WTC11 (cell line): ENCODE measurements at regions of chr16 and their contacts with region 1.

Region 1: DNA sequence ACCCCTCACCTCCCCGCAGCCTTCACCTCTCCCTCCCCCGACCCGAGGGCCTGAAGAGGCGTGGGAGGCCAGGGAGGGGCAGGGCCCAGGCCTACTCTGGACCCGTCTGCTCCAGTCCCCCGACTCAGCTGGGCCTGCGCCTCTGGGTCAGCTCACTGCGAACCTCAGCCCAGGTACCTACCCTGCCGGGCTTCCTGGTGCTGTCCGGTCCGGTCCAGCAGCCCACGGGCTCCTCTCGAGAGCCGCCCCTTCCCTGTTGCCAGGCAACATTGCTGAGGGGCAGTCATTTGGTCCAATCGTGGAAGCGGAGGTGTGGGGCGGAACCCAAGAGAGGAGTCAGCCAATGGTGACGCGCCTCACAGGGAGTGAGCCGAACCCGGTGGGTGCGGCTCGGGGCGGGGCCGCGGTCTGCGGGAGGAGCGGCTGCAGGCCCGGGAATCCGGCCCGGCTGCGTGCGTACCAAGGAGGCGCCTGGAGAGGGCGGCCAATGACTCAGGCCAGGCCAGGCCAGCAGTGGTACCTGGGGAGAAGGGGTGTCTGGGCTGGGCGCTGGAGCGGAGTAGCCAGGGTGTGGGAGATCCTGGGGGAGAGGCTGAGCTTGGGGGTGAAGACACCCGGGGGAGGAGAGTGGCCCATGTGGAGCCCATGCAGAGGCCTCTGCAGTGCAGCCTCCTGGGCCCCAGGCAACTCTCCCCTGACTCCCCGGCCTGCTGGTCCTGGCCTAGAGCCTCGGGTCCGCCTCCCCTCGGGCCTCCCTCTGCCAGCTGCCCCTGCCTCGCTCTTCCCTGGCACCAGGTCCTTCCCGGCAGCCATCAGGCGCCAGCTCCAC is at the start of gene MEAK7:
- DNase-seq: peak; percentile 99
- ATAC-seq: peak; percentile 96
- H3K4me3 Mint-ChIP-seq: peak within 1 kb of the TSS; percentile 79
- H3K27ac Mint-ChIP-seq: peak within 1 kb of the TSS; percentile 82
- H3K4me1 Mint-ChIP-seq: peaks cover 23% of the 10 kb centered on the region
- H3K27me3 Mint-ChIP-seq: no peaks in the 10 kb centered on the region
- CTCF ChIP-seq: no peak
- total RNA-seq, gene MEAK7: 14.4 to 16.7 TPM (median 15.3 TPM) in 3 replicates

Region 2: DNA sequence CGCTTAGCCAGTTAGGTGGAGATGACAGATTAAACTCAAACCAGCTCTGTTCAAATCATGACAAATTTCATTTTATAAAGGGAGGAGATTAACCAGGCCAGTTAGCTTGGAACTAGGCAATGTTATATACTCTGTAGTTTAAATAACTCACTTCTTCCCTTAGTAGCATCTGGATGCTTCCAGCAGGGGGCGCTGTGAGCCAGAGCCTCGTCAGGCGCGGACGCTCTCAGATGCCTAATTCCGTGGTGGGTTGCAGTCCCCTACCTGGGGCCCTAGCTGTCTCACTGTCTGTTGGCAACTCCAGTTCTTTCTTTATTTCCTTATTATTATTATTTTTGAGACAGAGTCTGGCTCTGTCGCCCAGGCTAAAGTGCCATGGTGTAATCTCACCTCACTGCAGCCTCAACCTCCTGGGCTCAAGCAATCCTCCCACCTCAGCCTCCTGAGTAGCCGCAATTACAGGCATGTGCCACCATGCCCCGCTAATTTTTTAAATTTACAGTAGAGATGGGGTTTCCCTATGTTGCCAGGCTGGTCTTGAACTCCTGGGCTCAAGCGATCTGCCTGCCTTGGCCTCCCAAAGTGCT is 227.3 kb before region 1 on chr16:
- CTCF ChIA-PET with region 1: interaction called, 12 read pairs
- POLR2A ChIA-PET with region 1: no interaction called
- DNase-seq: peak; percentile 83
- ATAC-seq: peak; percentile 79
- H3K4me3 Mint-ChIP-seq: no peak overlapping the region
- H3K27ac Mint-ChIP-seq: no peak overlapping the region
- H3K4me1 Mint-ChIP-seq: peaks cover 10% of the 10 kb centered on the region
- H3K27me3 Mint-ChIP-seq: no peaks in the 10 kb centered on the region; the same call in 1 of the 2 replicates
- CTCF ChIP-seq: peak; percentile 93

Region 3: DNA sequence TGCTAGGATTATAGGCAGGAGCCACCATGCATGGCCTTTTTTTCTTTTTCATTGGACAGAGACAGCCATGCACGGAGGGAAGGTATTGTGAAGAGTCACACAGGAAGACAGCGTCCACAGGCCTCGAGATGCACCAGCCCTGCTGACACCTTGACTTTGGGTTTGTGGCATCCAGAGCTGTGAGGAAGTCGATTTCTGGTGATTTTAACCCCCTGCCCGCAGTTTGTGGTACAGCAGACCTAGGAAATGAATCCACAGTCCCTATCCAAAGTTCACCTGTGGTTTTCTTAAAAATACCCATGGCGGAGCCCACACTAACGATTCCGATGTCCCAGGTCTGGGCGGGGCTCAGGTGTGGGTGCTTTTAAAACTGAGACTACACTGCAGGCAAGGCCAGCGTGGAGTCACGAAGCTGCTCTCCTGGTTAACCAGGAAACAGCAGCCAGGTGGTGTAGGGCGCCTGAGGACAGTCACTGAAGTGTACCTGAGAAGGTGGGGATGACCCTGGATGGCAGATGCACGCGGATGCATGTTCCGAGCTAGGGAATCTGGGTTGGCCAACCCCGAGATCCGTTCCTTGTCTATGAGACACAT is 14.2 kb after region 1 on chr16:
- CTCF ChIA-PET with region 1: interaction called, 18 read pairs
- POLR2A ChIA-PET with region 1: no interaction called
- DNase-seq: no peak
- ATAC-seq: peak; percentile 45
- H3K4me3 Mint-ChIP-seq: no peak overlapping the region
- H3K27ac Mint-ChIP-seq: no peak overlapping the region
- H3K4me1 Mint-ChIP-seq: peaks cover 19% of the 10 kb centered on the region
- H3K27me3 Mint-ChIP-seq: no peaks in the 10 kb centered on the region; the same call in 1 of the 2 replicates
- CTCF ChIP-seq: no peak

Region 4: DNA sequence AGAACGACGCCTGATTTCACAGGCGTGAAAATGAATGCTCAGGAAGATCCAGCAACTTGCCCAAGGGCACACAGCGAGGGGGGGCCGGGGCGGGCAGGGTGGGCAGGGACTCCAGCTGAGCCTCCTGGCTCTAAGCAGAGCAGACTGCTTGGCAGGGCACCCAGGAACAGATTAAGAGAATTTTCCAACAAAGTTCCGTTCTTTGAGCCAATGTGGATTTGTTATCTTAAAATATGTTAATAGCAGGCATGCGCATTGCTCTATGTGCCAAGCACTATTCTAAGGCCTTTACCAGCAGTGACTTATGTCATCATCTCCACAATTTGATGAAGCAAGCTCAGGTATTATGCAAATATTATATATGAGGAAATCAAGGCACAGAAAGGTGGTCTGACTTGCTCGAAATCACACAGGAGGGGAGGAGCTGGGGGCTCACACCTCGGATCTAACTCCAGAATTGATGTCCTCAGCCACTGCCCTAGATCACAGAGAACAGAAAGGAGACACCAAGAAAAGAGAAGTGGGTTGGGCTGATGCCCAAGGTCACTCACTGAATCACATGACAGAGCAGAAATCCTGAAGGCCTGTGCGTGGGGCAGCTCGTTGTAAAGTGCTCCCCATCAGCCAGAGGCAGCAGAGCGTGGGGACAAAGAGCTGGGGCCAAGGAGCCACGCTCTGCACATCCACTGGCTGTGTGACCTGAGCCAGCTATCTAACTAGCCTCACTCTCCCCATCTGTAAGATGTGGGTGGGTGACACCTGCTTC is 23.1 kb after region 1 on chr16:
- CTCF ChIA-PET with region 1: interaction called, 10 read pairs
- POLR2A ChIA-PET with region 1: no interaction called
- DNase-seq: no peak
- ATAC-seq: no peak
- H3K4me3 Mint-ChIP-seq: no peak overlapping the region
- H3K27ac Mint-ChIP-seq: no peak overlapping the region
- H3K4me1 Mint-ChIP-seq: peaks cover 31% of the 10 kb centered on the region
- H3K27me3 Mint-ChIP-seq: peaks cover 9% of the 10 kb centered on the region
- CTCF ChIP-seq: no peak

Region 5: DNA sequence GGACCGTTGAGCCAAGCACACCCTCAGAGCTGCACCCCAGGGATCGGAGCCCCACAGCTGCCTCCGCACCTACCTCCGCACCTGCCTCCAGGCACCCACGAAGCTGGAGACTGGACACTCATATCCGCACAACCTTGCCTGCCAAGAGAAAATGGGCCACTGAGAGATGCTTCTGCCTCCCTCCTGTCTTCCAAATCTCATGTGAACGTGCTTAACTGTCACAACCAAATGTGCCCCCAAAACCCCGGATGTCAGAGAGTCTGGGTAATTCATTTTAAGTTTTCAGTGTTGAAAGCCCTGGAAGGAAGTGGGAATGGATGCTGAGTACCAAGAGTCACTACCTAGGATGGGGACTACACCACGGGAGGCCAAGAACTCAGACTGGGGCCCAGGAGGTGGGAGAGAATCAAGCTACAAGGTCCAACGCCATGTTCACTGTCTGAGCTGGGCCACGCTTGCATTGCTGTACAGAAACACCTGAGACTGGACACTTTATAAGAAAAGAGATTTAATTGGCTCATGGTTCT is 49.3 kb after region 1 on chr16:
- CTCF ChIA-PET with region 1: interaction called, 10 read pairs
- POLR2A ChIA-PET with region 1: no interaction called
- DNase-seq: no peak
- ATAC-seq: no peak
- H3K4me3 Mint-ChIP-seq: no peak overlapping the region
- H3K27ac Mint-ChIP-seq: no peak overlapping the region
- H3K4me1 Mint-ChIP-seq: peaks cover 44% of the 10 kb centered on the region
- H3K27me3 Mint-ChIP-seq: no peaks in the 10 kb centered on the region
- CTCF ChIP-seq: no peak

Region 6: DNA sequence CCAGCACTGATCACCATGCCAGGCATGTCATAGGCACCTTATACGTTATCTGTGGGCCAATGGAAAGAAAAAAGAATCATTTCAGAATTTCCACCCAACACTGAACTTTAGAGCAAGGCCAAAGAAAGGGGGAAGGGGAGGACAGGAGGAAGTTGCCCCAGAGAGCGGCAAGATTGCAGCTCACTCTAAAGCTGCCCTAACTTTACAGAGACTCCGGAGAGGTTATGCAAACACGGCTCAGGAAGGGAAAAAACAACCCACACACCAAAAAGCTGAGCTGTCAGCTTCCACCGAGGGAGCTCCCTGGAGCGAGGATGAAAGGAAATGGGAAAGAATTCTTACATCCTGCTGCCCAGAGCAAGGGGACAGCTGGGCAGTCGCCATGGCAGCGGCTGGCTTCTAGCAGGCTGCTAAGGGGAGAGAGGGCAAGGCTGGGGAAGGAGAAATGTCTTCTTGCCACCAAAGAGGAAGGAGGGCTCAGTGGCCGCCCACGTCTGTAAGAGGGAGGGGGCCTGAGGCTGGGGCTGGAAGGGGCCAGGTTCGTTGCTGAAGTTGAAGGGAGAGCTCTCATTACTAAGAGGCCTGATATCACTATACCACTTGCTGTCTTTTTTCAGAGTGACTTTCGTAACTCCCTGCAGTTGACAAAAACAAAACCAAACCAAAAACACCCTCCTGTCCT is 95.0 kb after region 1 on chr16:
- CTCF ChIA-PET with region 1: interaction called, 17 read pairs
- POLR2A ChIA-PET with region 1: no interaction called
- DNase-seq: peak; percentile 74
- ATAC-seq: peak; percentile 74
- H3K4me3 Mint-ChIP-seq: peak overlapping the region; percentile 41
- H3K27ac Mint-ChIP-seq: peak overlapping the region; percentile 29
- H3K4me1 Mint-ChIP-seq: peaks cover 63% of the 10 kb centered on the region
- H3K27me3 Mint-ChIP-seq: no peaks in the 10 kb centered on the region; the same call in 1 of the 2 replicates
- CTCF ChIP-seq: no peak

Region 7: DNA sequence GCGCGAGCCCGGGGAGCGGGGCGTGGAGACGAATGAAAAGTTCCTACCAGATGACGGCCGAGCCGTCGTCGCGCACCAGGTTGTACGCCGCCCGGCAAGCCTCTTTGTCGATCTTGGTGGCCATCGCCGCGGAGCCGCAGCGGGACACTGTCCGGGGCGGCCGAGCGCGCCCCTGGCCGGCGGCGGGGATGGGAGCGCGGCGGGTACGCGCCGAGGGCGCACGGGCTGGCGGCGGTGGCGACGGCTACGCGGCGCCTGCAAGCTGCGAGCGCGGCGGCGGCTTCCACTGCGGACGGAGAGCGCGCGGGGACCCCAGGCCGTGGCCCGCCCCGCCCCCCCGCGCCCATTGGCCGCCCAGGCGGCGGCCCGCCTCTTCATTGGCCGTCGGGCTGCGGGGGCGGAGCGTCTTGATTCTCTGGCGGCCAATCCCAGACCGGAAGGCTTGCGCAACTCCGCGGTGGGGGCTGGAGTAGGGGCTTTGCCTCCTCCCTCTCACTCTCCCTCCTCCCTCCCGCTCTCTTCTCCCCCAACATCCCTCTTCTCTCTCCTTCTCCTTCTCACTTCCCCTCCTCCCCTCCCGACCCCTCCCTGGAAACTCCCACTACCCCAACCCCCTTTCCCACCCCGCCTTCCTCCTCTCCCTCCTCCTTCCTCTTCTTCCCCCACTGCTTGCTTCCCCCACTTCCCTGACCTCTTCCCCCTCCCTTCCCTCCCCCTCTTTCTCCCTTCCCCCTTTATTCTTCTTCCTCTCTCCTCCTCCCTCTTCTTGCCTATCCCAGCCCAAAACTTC is 113.4 kb after region 1 on chr16 and contains the start of gene COTL1:
- CTCF ChIA-PET with region 1: interaction called, 44 read pairs
- POLR2A ChIA-PET with region 1: no interaction called
- DNase-seq: peak; percentile 95
- ATAC-seq: peak; percentile 67
- H3K4me3 Mint-ChIP-seq: peak within 1 kb of the TSS; percentile 96
- H3K27ac Mint-ChIP-seq: peak within 1 kb of the TSS; percentile 77
- H3K4me1 Mint-ChIP-seq: peaks cover 48% of the 10 kb centered on the region
- H3K27me3 Mint-ChIP-seq: peaks cover 11% of the 10 kb centered on the region
- CTCF ChIP-seq: no peak
- total RNA-seq, gene COTL1: 102 to 122 TPM (median 122 TPM) in 3 replicates